ENCODE measurements at regions of chr14 and their contacts with region 1.

Region 1: GRCh38 chr14:68506021-68506644 is 286.7 kb downstream of the ZFP36L1 start:
- DNase-seq: no peak
- ATAC-seq: peak; percentile 32
- H3K4me3 ChIP-seq: peak overlapping the region; percentile 21
- H3K27ac ChIP-seq: peak overlapping the region; percentile 76
- H3K4me1 ChIP-seq: peaks cover 31% of the 10 kb centered on the region
- H3K27me3 ChIP-seq: no peaks in the 10 kb centered on the region
- CTCF ChIP-seq: no peak
- EP300 ChIP-seq: no peak
- POLR2A ChIP-seq: no peak
- RAD21 ChIP-seq: no peak

Region 2: GRCh38 chr14:68408680-68409079 is 97.5 kb before region 1 on chr14:
- CTCF ChIA-PET with region 1: interaction called, 12 read pairs
- POLR2A ChIA-PET with region 1: interaction called, 10 read pairs
- RAD21 ChIA-PET with region 1: interaction called, 45 read pairs
- SMC1A ChIA-PET with region 1: interaction called, 30 read pairs
- in situ Hi-C with region 1: no loop called
- intact Hi-C with region 1: no loop called
- DNase-seq: no peak
- ATAC-seq: peak; percentile 42
- H3K4me3 ChIP-seq: no peak overlapping the region
- H3K27ac ChIP-seq: no peak overlapping the region
- H3K4me1 ChIP-seq: peaks cover 39% of the 10 kb centered on the region
- H3K27me3 ChIP-seq: no peaks in the 10 kb centered on the region
- CTCF ChIP-seq: peak; percentile 25 to 54 (median 33); a peak in 5 of 6 replicates
- EP300 ChIP-seq: no peak
- POLR2A ChIP-seq: no peak
- RAD21 ChIP-seq: peak; percentile 67

Region 3: GRCh38 chr14:68466491-68467032 is 39.6 kb before region 1 on chr14:
- CTCF ChIA-PET with region 1: interaction called, 4 read pairs
- POLR2A ChIA-PET with region 1: interaction called, 10 read pairs
- RAD21 ChIA-PET with region 1: interaction called, 20 read pairs
- SMC1A ChIA-PET with region 1: interaction called, 21 read pairs
- in situ Hi-C with region 1: no loop called
- intact Hi-C with region 1: no loop called
- DNase-seq: no peak
- ATAC-seq: no peak
- H3K4me3 ChIP-seq: no peak overlapping the region
- H3K27ac ChIP-seq: no peak overlapping the region
- H3K4me1 ChIP-seq: peaks cover 16% of the 10 kb centered on the region
- H3K27me3 ChIP-seq: no peaks in the 10 kb centered on the region
- CTCF ChIP-seq: no peak
- EP300 ChIP-seq: no peak
- POLR2A ChIP-seq: no peak
- RAD21 ChIP-seq: no peak

Region 4: GRCh38 chr14:68486033-68486732 is 19.9 kb before region 1 on chr14:
- CTCF ChIA-PET with region 1: interaction called, 33 read pairs
- POLR2A ChIA-PET with region 1: interaction called, 4 read pairs
- RAD21 ChIA-PET with region 1: interaction called, 4 read pairs
- SMC1A ChIA-PET with region 1: interaction called, 14 read pairs
- in situ Hi-C with region 1: no loop called
- intact Hi-C with region 1: no loop called
- DNase-seq: no peak
- ATAC-seq: no peak
- H3K4me3 ChIP-seq: no peak overlapping the region
- H3K27ac ChIP-seq: no peak overlapping the region
- H3K4me1 ChIP-seq: peaks cover 4% of the 10 kb centered on the region; the same call in 1 of the 2 replicates
- H3K27me3 ChIP-seq: no peaks in the 10 kb centered on the region
- CTCF ChIP-seq: no peak
- EP300 ChIP-seq: no peak
- POLR2A ChIP-seq: no peak
- RAD21 ChIP-seq: no peak

Region 5: GRCh38 chr14:68520637-68521556 is 14.8 kb after region 1 on chr14:
- CTCF ChIA-PET with region 1: interaction called, 8 read pairs
- POLR2A ChIA-PET with region 1: interaction called, 20 read pairs
- RAD21 ChIA-PET with region 1: interaction called, 21 read pairs
- SMC1A ChIA-PET with region 1: interaction called, 55 read pairs
- in situ Hi-C with region 1: no loop called
- intact Hi-C with region 1: no loop called
- DNase-seq: no peak
- ATAC-seq: peak; percentile 44
- H3K4me3 ChIP-seq: no peak overlapping the region
- H3K27ac ChIP-seq: no peak overlapping the region
- H3K4me1 ChIP-seq: peaks cover 15% of the 10 kb centered on the region
- H3K27me3 ChIP-seq: no peaks in the 10 kb centered on the region
- CTCF ChIP-seq: no peak
- EP300 ChIP-seq: no peak
- POLR2A ChIP-seq: no peak
- RAD21 ChIP-seq: no peak

Region 6: DNA sequence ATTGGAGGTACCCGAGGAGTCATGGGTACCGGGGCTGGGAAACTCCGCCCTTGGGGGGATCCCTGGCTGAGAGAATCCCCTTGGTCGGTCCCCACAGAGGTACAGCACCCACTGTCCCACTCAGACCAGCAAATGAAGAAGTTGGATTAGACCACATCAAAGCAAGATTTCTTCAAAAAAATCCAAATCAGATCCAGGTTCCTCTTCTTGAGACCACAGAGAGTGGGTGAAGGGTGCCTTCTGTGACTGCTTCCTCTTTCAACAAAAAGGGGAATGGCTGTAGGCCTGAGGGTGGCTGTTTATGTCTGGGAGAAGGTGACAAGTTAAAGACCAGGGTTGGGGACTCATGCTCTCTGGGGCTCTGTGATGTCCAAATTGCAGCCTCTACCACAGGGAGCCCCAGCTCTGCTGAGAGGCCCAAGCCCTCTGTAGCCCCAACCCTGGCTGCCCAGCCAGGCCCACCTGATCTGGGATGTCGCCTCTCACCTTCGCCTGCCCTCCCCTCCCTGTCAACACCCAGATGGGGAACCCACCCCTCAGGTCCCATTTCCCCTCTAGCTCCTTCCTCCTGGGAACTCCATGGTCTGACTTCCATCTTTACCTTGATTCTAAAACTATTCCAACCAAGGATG is 235.8 kb after region 1 on chr14:
- CTCF ChIA-PET with region 1: no interaction called
- POLR2A ChIA-PET with region 1: no interaction called
- RAD21 ChIA-PET with region 1: interaction called, 3 read pairs
- SMC1A ChIA-PET with region 1: no interaction called
- in situ Hi-C with region 1: no loop called
- intact Hi-C with region 1: loop called (anchors 5 kb)
- DNase-seq: peak; percentile 93
- ATAC-seq: peak; percentile 97
- H3K4me3 ChIP-seq: no peak overlapping the region
- H3K27ac ChIP-seq: no peak overlapping the region
- H3K4me1 ChIP-seq: peaks cover 13% of the 10 kb centered on the region
- H3K27me3 ChIP-seq: no peaks in the 10 kb centered on the region
- CTCF ChIP-seq: no peak
- EP300 ChIP-seq: peak; percentile 81 to 89
- POLR2A ChIP-seq: no peak
- RAD21 ChIP-seq: 0 out of 2 replicates have a peak, but pooled peaks have one; percentile 22

Measured in GM12878 (cell line).